Natural killer cell (primary cell): ENCODE measurements at regions of chr17 and their contacts with region 1.

Region 1: DNA sequence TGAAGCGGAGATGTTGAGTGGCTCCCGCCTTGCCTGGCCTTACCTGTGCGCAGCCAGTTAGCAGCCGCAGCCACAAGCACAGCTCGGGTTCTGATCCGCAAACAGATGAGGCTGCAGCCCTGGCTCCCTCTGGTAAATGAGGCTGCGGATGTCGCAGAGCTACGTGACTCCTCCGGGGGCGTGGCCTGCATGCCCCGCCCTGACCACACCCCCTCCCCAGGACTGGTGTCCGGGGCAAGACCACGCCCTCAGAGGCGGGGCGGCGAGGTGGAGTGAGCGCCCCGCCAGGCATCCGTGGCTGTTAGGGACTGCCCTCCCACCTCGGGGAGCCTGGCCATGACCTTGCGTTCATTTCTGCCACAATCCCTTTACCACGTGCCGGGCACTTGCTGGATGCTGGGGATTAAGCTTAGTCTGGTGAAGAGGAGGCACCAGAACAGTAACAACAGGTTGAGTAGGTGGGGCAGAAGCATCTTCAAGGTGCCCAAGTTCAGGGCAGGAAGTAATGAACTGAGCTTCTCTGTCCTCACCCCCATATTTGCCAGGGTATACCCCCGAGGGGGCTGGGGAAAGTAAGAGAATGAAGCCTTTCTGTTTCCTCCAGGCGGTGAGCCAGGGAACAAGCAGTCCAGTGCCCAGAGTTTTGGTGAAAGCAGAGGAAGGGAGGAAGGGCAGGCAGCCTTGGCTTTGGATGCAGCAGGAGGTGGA is at the start of gene ALDOC:
- DNase-seq: peak; percentile 99
- ATAC-seq: peak; percentile 99 to 100 (median 99)
- H3K4me3 ChIP-seq: peak within 1 kb of the TSS; percentile 15
- H3K4me3 Mint-ChIP-seq: peak within 1 kb of the TSS; percentile 78
- H3K27ac ChIP-seq: peak within 1 kb of the TSS; percentile 4
- H3K27ac Mint-ChIP-seq: peak within 1 kb of the TSS; percentile 81 to 95
- H3K4me1 ChIP-seq: peaks cover 24% of the 10 kb centered on the region
- H3K4me1 Mint-ChIP-seq: peaks cover 26 to 29% of the 10 kb centered on the region in 2 donors
- H3K27me3 ChIP-seq: no peaks in the 10 kb centered on the region
- H3K27me3 Mint-ChIP-seq: no peaks in the 10 kb centered on the region
- CTCF ChIP-seq: no peak
- total RNA-seq, gene ALDOC: 18.2 to 25.4 (median 23.0) TPM

Region 2: DNA sequence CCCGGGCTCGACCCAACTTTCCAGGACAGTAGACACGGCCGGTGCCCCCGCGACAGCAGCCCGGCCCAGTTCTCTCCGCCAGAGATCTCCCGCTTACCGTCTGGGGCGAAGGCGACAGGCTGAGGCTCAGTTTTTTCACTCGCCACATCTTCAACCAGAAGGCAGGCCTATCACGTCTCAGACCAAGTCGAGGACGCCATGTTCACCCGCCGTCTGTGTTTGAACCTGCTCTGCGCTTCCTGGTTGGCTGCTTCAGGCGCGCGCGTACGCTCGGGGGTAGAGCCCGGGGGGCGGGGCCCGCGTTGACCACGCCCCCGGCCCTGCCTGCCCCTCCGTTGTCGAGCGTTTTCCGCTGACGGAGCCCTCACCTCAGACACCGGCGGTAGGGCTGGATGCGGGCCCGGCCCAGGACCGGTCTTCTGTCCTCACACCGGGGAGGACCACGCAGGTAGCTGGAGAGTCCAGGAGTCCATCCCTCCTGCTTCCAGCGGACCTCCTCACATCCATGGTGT is 21.9 kb after region 1 on chr17 and contains the start of gene SPAG5:
- intact Hi-C with region 1: loop called (anchors 1 kb)
- DNase-seq: peak; percentile 96 to 97
- ATAC-seq: peak; percentile 89 to 99 (median 93)
- H3K4me3 ChIP-seq: peak within 1 kb of the TSS; percentile 71
- H3K4me3 Mint-ChIP-seq: peak within 1 kb of the TSS; percentile 94
- H3K27ac ChIP-seq: peak within 1 kb of the TSS; percentile 95
- H3K27ac Mint-ChIP-seq: peak within 1 kb of the TSS; percentile 95 to 98
- H3K4me1 ChIP-seq: peaks cover 19% of the 10 kb centered on the region
- H3K4me1 Mint-ChIP-seq: peaks cover 22 to 23% of the 10 kb centered on the region in 2 donors
- H3K27me3 ChIP-seq: no peaks in the 10 kb centered on the region
- H3K27me3 Mint-ChIP-seq: no peaks in the 10 kb centered on the region
- CTCF ChIP-seq: no peak
- total RNA-seq, gene SPAG5: 18.0 to 19.6 (median 19.3) TPM